GM18951 (cell line): ENCODE measurements at regions of chr10 and their contacts with region 1.

Region 1: DNA sequence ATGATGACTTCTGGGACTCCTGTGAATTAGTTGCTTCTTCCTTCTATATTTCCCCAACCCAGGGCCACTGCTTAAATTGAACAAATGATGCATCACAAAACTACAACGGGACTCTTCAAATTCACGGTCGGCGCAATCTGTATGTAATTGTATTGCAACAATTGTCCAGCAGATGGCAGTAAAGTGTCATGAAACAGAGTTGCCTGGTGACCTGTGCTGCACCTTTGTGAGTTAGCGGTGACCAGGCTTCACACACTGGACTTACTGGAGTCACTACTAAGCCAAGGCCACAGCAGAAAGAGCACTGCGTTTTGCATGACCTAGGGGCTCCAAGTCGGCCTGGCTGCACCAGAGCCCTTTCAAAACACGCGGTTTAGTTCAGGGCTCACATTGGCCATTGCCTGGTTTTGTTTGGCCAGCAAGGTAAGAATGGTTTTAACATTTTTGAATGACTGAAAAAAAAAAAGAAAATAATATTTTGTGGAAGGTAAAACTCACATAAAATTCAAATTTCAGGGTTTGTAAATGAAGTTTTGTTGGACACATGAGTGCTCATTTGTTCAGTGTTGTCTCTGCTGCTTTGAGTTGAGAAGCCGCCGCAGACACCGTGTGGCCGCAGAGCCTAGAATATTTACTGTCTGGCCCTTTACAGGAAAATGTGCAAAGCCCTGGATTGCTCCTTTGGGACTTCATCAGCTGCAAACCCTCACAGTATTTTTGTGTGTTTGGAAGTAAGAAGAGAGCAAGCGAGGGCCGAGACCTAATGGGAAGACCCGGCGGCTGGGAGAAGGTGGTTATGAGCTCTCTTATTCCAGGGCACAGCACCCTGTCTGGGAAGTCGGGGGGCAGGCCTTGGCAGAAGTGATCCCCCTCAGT is 23.2 kb upstream of the ZNF32 start:
- POLR2A ChIP-seq: no peak

Region 2: DNA sequence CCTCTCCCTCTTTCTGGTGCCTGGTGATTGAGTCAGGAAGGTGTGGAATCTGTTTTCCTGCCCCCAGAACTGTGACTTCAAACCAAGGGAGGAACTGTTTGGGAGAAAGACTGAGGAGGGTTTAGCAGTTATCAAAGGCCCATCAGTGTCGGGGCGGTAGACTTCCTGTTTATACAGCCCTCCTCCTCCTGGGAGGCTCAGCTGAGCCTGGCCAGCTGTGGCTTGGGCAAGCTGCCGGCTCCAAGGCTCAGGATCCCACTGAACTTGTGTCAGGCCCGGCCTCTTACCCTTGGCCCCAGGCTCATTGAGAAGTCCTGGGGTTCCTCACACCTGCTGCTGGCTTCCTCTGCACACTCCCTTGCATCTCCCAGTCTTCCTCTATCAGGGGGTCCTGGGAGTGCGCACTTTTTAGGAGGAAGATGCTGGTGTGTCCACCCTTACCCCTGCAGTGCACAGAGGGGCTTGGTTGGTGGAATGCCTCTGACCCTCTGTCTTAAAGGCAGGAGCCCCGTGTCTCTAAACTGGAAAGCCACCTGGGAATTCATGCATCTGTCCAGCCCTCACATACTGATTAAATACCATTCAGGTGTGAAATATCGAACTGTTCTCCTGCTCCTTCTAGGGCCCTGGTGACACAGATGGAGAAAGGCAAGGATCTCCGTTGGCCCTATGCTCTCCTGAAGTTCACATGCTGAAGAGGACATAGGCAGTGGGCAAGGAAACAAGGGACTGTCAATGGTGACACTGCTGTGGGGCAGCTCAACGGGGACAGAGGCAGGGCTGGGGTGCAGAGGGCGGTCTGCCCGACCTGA is 680.6 kb after region 1 on chr10:
- in situ Hi-C with region 1: loop called (anchors 25 kb)
- POLR2A ChIP-seq: no peak